Activated CD4-positive, alpha-beta memory T cell treated with anti-CD3 and anti-CD28 coated beads, Interleukin-2, amount 10 ng/mL, durations not matched to agents 7 days and 5 days (primary cell): ENCODE measurements at regions of chr6 and their contacts with region 1.

Region 1: DNA sequence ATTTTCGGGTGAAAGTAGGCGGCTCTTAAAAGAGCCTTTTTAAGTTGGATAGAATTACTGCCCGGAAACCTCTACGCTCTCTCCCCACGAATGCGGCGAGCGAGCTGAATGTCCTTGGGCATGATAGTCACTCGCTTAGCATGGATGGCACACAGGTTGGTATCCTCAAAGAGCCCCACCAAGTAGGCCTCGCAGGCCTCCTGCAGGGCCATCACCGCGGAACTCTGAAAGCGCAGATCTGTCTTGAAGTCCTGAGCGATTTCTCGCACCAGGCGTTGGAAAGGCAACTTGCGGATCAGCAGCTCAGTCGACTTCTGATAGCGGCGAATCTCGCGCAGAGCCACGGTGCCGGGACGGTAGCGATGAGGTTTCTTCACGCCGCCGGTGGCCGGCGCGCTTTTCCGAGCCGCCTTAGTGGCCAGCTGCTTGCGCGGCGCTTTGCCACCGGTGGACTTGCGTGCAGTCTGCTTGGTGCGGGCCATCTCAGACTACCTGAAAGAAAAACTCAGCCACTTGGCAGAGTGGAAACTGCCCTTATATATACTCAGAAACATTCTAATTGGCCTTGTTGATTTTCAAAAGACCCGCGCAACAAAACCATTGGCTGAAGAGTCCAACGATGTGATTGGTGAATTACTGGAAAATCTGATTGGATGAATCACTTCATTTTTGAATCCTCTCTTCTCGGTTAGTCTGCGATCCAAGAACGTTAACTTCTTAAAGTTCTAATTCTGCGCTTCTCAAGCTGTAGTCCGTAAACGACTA is 93.9 kb upstream of the BTN3A2 start:
- DNase-seq: peak; percentile 87
- H3K4me3 Mint-ChIP-seq: no peak overlapping the region
- H3K27ac Mint-ChIP-seq: no peak overlapping the region
- H3K4me1 Mint-ChIP-seq: peaks cover 35% of the 10 kb centered on the region
- H3K27me3 Mint-ChIP-seq: no peaks in the 10 kb centered on the region

Region 2: DNA sequence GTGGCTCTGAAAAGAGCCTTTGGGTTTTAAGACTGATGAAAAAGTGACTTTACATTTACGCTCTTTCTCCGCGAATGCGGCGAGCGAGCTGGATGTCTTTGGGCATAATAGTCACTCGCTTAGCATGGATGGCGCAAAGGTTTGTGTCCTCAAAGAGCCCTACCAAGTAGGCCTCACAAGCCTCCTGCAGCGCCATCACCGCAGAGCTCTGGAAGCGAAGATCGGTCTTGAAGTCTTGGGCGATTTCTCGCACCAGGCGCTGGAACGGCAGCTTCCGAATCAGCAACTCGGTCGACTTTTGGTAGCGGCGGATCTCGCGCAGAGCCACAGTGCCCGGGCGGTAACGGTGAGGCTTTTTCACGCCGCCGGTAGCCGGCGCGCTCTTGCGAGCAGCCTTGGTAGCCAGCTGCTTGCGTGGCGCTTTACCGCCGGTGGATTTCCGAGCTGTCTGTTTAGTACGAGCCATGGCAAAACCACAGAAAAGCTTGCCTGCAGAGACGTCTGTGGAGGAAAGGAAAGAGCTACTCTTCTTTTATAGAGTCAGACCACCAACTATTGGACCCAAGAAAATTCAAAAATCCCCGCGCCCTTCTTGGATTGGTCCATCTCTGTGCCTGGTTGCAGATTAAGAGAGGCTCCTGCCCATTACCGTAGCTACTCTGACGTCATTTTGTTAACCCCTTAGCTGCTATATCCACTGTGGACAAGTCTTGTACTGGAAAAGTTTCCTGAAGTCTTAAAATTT is 239.3 kb before region 1 on chr6:
- CTCF ChIA-PET with region 1: no interaction called
- POLR2A ChIA-PET with region 1: interaction called, 81 read pairs
- DNase-seq: peak; percentile 92
- H3K4me3 Mint-ChIP-seq: peak overlapping the region; percentile 84
- H3K27ac Mint-ChIP-seq: peak overlapping the region; percentile 100
- H3K4me1 Mint-ChIP-seq: peaks cover 74% of the 10 kb centered on the region
- H3K27me3 Mint-ChIP-seq: peaks cover 4% of the 10 kb centered on the region

Region 3: DNA sequence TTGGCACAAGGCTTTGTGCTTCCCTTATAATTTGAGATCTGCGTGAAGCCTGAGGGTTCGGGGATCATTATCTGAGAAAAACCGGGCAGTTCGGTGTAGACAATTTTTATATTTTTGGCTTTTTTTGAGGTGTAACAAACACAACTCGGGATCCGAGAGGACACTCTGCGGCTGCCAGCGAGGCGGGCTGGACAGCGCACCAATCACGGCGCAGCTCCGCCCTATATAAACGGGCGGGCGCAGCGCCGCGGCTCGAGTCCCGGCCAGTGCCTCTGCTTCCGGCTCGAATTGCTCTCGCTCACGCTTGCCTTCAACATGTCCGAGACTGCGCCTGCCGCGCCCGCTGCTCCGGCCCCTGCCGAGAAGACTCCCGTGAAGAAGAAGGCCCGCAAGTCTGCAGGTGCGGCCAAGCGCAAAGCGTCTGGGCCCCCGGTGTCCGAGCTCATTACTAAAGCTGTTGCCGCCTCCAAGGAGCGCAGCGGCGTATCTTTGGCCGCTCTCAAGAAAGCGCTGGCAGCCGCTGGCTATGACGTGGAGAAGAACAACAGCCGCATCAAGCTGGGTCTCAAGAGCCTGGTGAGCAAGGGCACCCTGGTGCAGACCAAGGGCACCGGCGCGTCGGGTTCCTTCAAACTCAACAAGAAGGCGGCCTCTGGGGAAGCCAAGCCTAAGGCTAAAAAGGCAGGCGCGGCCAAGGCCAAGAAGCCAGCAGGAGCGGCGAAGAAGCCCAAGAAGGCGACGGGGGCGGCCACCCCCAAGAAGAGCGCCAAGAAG is 114.8 kb before region 1 on chr6:
- CTCF ChIA-PET with region 1: no interaction called
- POLR2A ChIA-PET with region 1: interaction called, 249 read pairs
- DNase-seq: peak; percentile 91
- H3K4me3 Mint-ChIP-seq: peak overlapping the region; percentile 95
- H3K27ac Mint-ChIP-seq: peak overlapping the region; percentile 98
- H3K4me1 Mint-ChIP-seq: peaks cover 45% of the 10 kb centered on the region
- H3K27me3 Mint-ChIP-seq: no peaks in the 10 kb centered on the region

Region 4: GRCh38 chr6:26223650-26224546 is 47.2 kb before region 1 on chr6:
- CTCF ChIA-PET with region 1: no interaction called
- POLR2A ChIA-PET with region 1: interaction called, 123 read pairs
- DNase-seq: peak; percentile 72
- H3K4me3 Mint-ChIP-seq: no peak overlapping the region
- H3K27ac Mint-ChIP-seq: no peak overlapping the region
- H3K4me1 Mint-ChIP-seq: peaks cover 31% of the 10 kb centered on the region
- H3K27me3 Mint-ChIP-seq: no peaks in the 10 kb centered on the region

Region 5: GRCh38 chr6:26312501-26313390 is 41.7 kb after region 1 on chr6:
- CTCF ChIA-PET with region 1: interaction called, 4 read pairs
- POLR2A ChIA-PET with region 1: interaction called, 55 read pairs
- DNase-seq: peak; percentile 81
- H3K4me3 Mint-ChIP-seq: peak overlapping the region; percentile 83
- H3K27ac Mint-ChIP-seq: peak overlapping the region; percentile 82
- H3K4me1 Mint-ChIP-seq: peaks cover 53% of the 10 kb centered on the region
- H3K27me3 Mint-ChIP-seq: no peaks in the 10 kb centered on the region

Region 6: DNA sequence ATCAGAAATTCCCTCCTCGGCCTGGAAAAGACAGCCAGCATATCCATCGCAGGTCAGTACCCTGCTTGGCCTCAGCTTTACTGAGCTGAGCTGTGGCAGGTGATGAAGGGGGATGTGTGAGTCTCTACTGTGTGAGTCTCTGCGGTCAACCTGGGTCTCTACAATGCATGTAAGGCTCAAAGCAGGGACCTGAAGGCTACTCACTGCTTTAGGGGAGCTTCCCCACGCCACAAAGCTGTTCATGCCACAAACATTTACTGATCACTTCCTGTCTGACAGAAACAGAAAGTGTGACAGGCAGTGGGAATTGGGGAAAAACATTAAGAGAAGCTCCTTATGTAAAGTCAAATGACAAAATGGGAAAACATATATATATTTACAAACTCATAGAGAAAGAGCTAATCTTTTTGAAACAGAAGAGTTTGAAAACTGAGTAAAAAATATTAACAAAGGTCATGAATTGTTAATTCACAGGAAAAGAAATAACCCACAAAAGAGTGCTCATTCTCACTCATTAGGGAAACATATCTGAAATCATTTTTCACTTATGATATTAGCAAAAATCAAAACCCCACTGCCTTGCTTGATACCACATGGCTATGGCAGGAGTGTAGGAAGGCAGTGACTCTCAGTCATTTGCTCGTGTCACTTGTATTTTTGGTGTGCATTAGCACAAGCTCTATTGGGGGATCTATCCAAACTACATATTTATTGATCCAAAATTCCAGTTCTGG is 175.0 kb after region 1 on chr6:
- CTCF ChIA-PET with region 1: no interaction called
- POLR2A ChIA-PET with region 1: no interaction called
- DNase-seq: peak; percentile 49
- H3K4me3 Mint-ChIP-seq: no peak overlapping the region
- H3K27ac Mint-ChIP-seq: peak overlapping the region; percentile 17
- H3K4me1 Mint-ChIP-seq: peaks cover 46% of the 10 kb centered on the region
- H3K27me3 Mint-ChIP-seq: no peaks in the 10 kb centered on the region

Region 7: DNA sequence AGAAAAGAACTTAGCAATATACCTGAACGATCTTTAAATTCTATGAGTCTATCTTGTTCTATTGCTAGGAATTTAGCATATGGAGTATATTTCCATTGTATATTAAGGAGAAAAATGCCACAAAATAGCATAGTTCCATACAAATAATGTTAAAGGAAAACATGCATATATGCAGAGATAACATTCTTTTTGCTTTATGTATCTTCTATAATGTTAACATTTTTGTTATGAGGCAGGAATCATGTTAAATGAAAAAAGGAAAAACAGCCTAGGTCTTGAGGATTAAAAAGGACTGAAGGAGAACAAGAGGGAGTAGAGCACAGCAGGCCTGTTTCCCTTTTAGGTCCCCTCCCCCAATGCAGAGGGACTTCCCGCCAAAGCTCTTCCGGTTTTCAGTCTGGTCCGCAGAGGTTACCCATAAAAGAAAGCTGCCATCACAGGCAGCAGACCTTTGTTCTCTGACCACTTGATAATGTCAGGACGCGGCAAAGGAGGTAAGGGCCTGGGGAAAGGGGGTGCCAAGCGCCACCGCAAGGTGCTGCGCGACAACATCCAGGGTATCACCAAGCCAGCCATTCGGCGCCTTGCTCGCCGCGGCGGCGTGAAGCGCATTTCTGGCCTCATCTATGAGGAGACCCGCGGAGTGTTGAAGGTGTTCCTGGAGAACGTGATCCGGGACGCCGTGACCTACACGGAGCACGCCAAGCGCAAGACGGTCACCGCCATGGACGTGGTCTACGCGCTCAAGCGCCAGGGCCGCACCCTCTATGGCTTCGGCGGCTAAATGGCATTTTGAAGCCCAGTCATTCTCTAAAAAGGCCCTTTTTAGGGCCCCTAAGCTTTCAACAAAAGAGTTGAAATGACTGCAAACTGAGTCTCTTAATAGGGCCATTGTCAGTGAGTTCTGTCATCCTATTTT is 868.0 kb after region 1 on chr6:
- CTCF ChIA-PET with region 1: no interaction called
- POLR2A ChIA-PET with region 1: interaction called, 139 read pairs
- DNase-seq: peak; percentile 80
- H3K4me3 Mint-ChIP-seq: peak overlapping the region; percentile 91
- H3K27ac Mint-ChIP-seq: peak overlapping the region; percentile 98
- H3K4me1 Mint-ChIP-seq: peaks cover 67% of the 10 kb centered on the region
- H3K27me3 Mint-ChIP-seq: no peaks in the 10 kb centered on the region